Activated CD4-positive, alpha-beta T cell treated with anti-CD3 and anti-CD28 coated beads for 36 hours (primary cell): ENCODE measurements at regions of chr6 and their contacts with region 1.

Region 1: DNA sequence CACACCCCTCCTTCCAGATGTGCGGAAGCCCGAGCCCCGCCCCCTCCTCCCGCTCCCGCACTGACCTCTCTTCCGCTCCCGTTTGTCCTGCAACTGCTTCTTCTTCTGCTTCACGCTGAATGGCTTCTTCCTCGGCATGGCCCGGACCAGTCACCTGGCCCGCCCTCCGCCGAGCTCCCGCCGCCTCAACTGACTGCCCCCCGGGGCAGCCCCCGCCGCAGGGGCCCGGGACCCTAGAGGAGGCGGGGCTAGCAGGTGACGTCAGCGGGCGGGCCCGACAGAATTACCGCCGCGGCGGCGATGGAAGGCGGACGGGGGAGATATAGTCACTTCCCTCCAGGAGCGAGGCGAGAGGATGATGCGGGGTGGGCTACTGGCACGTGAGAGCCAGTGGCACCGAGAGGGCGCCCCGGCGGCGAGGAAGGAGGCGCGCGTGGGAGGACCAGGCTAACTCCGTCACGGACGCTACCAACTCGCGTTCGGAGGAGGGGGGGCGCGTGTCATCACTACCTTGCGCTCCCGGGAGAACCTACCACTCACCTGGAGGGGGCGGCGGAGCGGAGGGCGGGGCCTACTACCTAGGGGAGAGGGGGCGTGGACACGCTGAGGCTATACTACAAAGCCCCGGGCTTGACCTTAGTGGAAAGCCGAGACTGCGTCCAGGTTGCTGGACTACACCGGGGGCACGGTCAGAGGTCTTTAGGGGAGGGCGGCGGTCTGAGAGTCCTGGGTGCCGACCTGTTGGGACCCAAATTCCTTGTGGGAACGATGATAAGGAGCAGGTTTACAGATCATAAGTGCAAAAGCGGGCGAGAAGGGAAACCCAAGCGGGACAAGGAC is at the start of gene GNL1:
- DNase-seq: peak; percentile 100
- ATAC-seq: peak; percentile 89
- H3K4me3 Mint-ChIP-seq: peak within 1 kb of the TSS; percentile 97
- H3K27ac Mint-ChIP-seq: peak within 1 kb of the TSS; percentile 100
- H3K4me1 Mint-ChIP-seq: peaks cover 34% of the 10 kb centered on the region
- H3K27me3 Mint-ChIP-seq: no peaks in the 10 kb centered on the region
- total RNA-seq, gene GNL1: 91.3 to 104 TPM

Region 2: GRCh38 chr6:30326526-30327260 is 229.6 kb before region 1 on chr6 and contains the start of gene TRIM39:
- CTCF ChIA-PET with region 1: no interaction called
- POLR2A ChIA-PET with region 1: interaction called, 3 read pairs
- intact Hi-C with region 1: loop called in 1 of 2 experiments (anchors 1 kb)
- DNase-seq: peak; percentile 93
- ATAC-seq: peak; percentile 60
- H3K4me3 Mint-ChIP-seq: peak within 1 kb of the TSS; percentile 86
- H3K27ac Mint-ChIP-seq: peak within 1 kb of the TSS; percentile 97
- H3K4me1 Mint-ChIP-seq: peaks cover 54% of the 10 kb centered on the region
- H3K27me3 Mint-ChIP-seq: no peaks in the 10 kb centered on the region
- total RNA-seq, gene TRIM39: 16.5 to 17.5 TPM

Region 3: GRCh38 chr6:30515932-30516753 is 40.1 kb before region 1 on chr6:
- CTCF ChIA-PET with region 1: no interaction called
- POLR2A ChIA-PET with region 1: no interaction called
- intact Hi-C with region 1: loop called in 1 of 2 experiments (anchors 1 kb)
- DNase-seq: peak; percentile 96
- ATAC-seq: peak; percentile 87
- H3K4me3 Mint-ChIP-seq: peak overlapping the region; percentile 74
- H3K27ac Mint-ChIP-seq: peak overlapping the region; percentile 98
- H3K4me1 Mint-ChIP-seq: peaks cover 69% of the 10 kb centered on the region
- H3K27me3 Mint-ChIP-seq: no peaks in the 10 kb centered on the region

Region 4: GRCh38 chr6:30571075-30571768 is 14.9 kb after region 1 on chr6 and contains the start of gene ABCF1:
- CTCF ChIA-PET with region 1: interaction called, 9 read pairs
- POLR2A ChIA-PET with region 1: interaction called, 24 read pairs
- intact Hi-C with region 1: loop called (anchors 1 kb)
- DNase-seq: peak; percentile 100
- ATAC-seq: peak; percentile 86
- H3K4me3 Mint-ChIP-seq: peak within 1 kb of the TSS; percentile 94
- H3K27ac Mint-ChIP-seq: peak within 1 kb of the TSS; percentile 100
- H3K4me1 Mint-ChIP-seq: peaks cover 62% of the 10 kb centered on the region
- H3K27me3 Mint-ChIP-seq: no peaks in the 10 kb centered on the region
- total RNA-seq, gene ABCF1: 100.0 to 105 TPM

Region 5: DNA sequence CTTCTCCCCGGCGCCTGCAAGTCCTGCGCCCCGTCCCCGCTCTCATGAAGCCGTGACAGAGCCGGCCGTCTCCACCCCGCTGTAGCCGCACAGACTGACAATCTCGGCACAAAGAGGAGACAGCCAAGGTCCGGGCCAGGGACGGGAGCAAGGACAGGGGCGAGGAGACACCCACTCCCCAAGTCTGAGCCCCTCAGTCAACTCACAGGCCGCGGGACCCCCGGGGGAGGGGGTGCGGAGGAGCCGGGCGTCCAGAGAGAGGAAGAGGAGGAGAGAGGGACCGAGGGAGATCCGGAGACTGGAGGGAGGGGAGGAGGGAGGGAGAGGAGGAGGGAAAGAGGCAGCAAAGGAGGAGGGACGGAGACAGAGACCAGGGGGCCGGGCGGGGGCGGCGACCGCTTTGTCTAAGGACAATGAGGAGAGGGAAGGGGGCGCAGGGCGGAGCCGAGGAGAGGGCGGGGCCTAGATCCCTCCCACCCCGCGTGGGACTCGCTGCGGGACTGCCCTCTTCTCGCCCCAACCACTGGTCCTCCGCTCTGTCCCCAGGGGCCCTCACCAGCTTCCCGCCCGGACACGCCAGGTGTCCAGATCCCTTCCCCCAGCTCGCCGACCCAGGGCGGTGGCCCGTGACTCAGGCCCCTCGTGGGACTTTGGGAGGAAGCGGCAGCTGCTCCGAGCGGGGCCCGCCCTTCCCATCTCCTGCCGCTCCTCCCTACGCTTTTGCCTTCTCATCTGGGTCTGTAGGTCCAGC is 130.8 kb after region 1 on chr6:
- CTCF ChIA-PET with region 1: interaction called, 3 read pairs
- POLR2A ChIA-PET with region 1: interaction called, 4 read pairs
- intact Hi-C with region 1: loop called in 1 of 2 experiments (anchors 1 kb)
- DNase-seq: peak; percentile 90
- ATAC-seq: peak; percentile 20
- H3K4me3 Mint-ChIP-seq: peak overlapping the region; percentile 100
- H3K27ac Mint-ChIP-seq: peak overlapping the region; percentile 89
- H3K4me1 Mint-ChIP-seq: peaks cover 42% of the 10 kb centered on the region
- H3K27me3 Mint-ChIP-seq: no peaks in the 10 kb centered on the region

Region 6: GRCh38 chr6:30914076-30914853 is 358.0 kb after region 1 on chr6 and contains the start of gene VARS2:
- CTCF ChIA-PET with region 1: no interaction called
- POLR2A ChIA-PET with region 1: no interaction called
- intact Hi-C with region 1: loop called in 1 of 2 experiments (anchors 2 kb)
- DNase-seq: peak; percentile 92
- ATAC-seq: peak; percentile 98
- H3K4me3 Mint-ChIP-seq: peak within 1 kb of the TSS; percentile 87
- H3K27ac Mint-ChIP-seq: peak within 1 kb of the TSS; percentile 95
- H3K4me1 Mint-ChIP-seq: peaks cover 24% of the 10 kb centered on the region
- H3K27me3 Mint-ChIP-seq: no peaks in the 10 kb centered on the region
- total RNA-seq, gene VARS2: 68.1 to 81.1 TPM